Psoas muscle (tissue), 8 donors: ENCODE measurements at regions of chr7 and their contacts with region 1.

Region 1: DNA sequence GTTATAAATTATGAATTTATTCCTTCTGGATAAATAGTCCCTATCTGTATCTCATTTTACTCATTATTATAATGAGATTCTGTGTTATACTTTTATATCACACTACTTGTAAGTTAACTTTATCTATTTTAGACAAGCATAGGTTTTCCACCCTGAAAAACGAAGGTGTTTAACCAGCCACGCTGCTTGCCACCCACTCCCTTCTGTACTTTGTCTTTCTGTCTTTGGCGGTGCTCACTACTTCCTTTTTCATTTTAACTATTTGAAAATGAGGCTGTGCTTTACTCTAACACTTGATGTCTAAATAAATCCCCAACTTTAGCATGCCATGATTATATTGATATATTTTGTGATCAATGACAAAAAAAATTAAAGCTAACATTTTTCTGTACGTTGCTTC is 952.9 kb downstream of the DNAJB9 start:
- DNase-seq: no peak
- ATAC-seq: no peak
- H3K4me3 ChIP-seq: no peak overlapping the region
- H3K27ac ChIP-seq: no peak overlapping the region
- H3K4me1 ChIP-seq: no peaks in the 10 kb centered on the region
- H3K27me3 ChIP-seq: no peaks in the 10 kb centered on the region
- CTCF ChIP-seq: no peak

Region 2: GRCh38 chr7:109577265-109577664 is 54.7 kb after region 1 on chr7:
- intact Hi-C with region 1: loop called in 1 of 2 experiments (anchors 2 kb)
- DNase-seq: no peak
- ATAC-seq: no peak
- H3K4me3 ChIP-seq: no peak overlapping the region
- H3K27ac ChIP-seq: no peak overlapping the region
- H3K4me1 ChIP-seq: no peaks in the 10 kb centered on the region
- H3K27me3 ChIP-seq: no peaks in the 10 kb centered on the region
- CTCF ChIP-seq: no peak